Calu3 (cell line): ENCODE measurements at regions of chr3 and their contacts with region 1.

Region 1: GRCh38 chr3:187223799-187224198 is 26.5 kb downstream of the RTP1 start:
- DNase-seq: peak; percentile 79
- H3K4me3 Mint-ChIP-seq: no peak overlapping the region
- H3K27ac Mint-ChIP-seq: peak overlapping the region; percentile 65
- H3K4me1 Mint-ChIP-seq: peaks cover 33% of the 10 kb centered on the region
- H3K27me3 Mint-ChIP-seq: peaks cover 5% of the 10 kb centered on the region
- CTCF ChIP-seq: no peak

Region 2: DNA sequence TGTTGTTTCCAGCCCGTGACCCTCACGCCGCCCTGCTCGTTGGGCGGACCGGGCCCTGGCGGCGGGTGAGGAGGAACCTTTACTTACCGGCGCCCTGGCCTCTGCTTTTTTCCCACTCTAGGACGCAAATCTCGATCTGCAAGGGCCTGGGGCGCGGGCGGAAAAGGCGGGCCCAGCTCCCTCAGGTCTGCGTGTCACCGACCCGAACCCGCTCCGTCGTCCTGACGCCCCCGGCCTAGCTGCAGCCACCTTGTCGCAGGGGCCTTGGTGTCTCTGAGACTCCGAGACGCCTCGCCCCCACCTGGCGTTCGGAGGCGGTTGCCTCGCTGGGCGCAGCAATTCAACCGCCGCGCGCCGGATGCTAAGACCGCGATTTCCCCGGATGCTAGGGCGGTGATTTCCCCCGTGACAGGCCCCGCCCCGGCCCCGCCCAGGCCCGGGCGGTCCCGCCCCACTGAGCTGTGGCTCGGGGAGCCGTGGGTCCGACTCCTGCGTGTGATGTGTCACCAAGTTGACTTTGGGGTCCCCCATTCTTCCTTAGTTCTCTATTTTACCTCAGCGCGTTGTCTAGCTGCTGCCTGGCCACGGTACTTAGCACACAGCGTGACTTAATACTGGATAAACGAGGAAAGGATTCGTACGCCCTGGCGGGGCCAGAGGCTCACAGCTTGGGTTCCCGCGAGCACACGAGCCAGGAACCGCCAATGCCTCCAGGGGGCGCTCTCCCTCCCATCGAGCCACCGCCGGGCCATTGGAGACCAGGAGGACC is 84.5 kb before region 1 on chr3 and contains the start of gene RPL39L:
- CTCF ChIA-PET with region 1: interaction called, 8 read pairs
- intact Hi-C with region 1: loop called (anchors 2 kb)
- DNase-seq: peak; percentile 96
- H3K4me3 Mint-ChIP-seq: peak within 1 kb of the TSS; percentile 84
- H3K27ac Mint-ChIP-seq: peak within 1 kb of the TSS; percentile 69
- H3K4me1 Mint-ChIP-seq: no peaks in the 10 kb centered on the region
- H3K27me3 Mint-ChIP-seq: no peaks in the 10 kb centered on the region
- CTCF ChIP-seq: peak; percentile 99
- total RNA-seq, gene RPL39L: 27.2 and 31.8 TPM in 2 replicates

Region 3: DNA sequence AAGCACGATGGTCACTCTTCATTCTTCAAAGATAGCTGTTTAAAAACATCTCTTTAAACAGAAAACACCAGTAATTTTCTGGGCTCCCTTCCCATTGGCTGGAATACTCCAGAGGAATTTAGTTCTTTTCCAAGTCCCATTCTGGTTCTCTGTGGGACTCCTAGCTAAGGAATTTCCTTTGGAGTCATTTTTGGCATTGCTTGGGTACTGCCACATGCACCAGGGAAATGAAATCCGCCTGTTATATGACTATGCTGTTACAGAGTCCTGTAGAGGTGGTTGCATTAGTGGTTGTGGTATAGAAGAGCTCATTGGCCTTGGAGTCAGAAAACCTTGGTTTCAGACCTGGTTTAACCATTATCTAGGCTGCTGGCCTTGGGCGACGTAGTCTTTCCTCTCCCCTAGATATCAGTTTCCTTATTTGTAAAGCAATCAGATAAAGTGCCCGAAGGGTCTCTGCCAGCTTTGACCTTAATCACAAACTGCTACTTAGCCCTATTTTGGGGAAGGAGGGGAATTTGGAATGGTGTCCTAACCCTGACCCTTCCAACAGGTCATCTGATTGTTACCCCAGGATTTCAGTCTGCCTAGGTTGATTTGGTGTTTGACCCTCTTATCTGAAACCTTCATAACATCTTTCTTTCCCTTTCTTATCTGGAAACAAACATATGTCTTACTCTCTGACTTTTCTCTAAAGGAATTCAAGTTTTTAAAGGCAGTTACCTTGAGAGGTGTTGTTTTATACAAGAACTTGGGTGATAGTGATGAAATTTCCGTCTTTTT is 13.1 kb before region 1 on chr3:
- CTCF ChIA-PET with region 1: interaction called, 10 read pairs
- intact Hi-C with region 1: no loop called
- DNase-seq: no peak
- H3K4me3 Mint-ChIP-seq: no peak overlapping the region
- H3K27ac Mint-ChIP-seq: no peak overlapping the region
- H3K4me1 Mint-ChIP-seq: peaks cover 40% of the 10 kb centered on the region
- H3K27me3 Mint-ChIP-seq: peaks cover 3% of the 10 kb centered on the region
- CTCF ChIP-seq: no peak

Region 4: DNA sequence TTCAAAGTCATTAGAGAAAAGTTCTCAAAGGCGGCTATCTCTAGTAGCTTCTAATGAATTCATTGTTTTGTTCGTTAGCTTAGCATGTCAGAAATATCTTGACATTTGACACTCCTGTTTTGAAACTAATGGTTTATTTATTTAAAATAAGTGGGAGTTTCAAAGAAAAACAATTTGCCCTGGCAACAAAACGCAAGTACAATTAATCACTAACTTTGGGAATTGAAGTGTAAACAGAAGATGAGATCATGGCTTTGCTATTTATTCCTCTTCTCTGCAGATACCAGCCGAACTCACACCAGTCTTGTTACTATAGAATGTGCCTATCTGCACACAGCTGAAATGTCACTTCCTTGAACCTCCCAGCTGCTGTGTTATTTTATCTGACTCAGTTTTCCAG is 40.2 kb after region 1 on chr3:
- CTCF ChIA-PET with region 1: interaction called, 14 read pairs
- intact Hi-C with region 1: loop called (anchors 5 kb)
- DNase-seq: peak; percentile 47
- H3K4me3 Mint-ChIP-seq: no peak overlapping the region
- H3K27ac Mint-ChIP-seq: peak overlapping the region; percentile 7
- H3K4me1 Mint-ChIP-seq: peaks cover 44% of the 10 kb centered on the region
- H3K27me3 Mint-ChIP-seq: no peaks in the 10 kb centered on the region
- CTCF ChIP-seq: no peak

Region 5: DNA sequence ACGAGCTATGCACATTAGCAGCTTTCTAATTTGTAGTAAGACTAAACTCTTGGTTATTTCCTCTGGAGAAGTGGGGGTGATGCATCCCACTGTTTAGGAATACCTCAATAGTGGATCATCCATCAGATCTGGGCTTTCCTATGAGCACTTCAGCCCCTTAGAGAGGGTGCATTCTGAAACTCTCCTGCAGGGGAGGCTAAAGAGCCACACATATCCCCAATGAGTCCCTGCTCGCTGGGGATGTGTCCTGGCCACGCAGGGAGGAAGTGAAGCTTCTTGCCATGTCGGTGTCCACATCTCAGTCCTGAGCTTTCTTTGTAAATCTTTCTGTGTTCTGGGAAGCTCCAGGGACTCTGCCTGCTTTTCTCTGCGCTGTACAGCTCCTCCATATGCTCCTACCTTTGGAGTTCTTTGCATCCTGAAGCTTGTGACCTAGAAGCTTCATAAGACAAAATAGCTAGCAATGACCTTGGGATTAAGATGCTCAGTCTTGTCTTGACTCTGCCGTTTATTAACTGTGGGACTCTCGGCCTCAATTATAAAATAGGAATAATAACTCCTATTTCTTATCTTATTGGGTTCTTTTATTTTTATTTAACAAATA is 96.0 kb after region 1 on chr3:
- CTCF ChIA-PET with region 1: interaction called, 49 read pairs
- intact Hi-C with region 1: loop called (anchors 1 kb)
- DNase-seq: peak; percentile 84
- H3K4me3 Mint-ChIP-seq: peak overlapping the region; percentile 47
- H3K27ac Mint-ChIP-seq: no peak overlapping the region
- H3K4me1 Mint-ChIP-seq: peaks cover 8% of the 10 kb centered on the region
- H3K27me3 Mint-ChIP-seq: peaks cover 33% of the 10 kb centered on the region
- CTCF ChIP-seq: peak; percentile 97

Region 6: GRCh38 chr3:187714404-187714979 is 490.7 kb after region 1 on chr3:
- CTCF ChIA-PET with region 1: no interaction called
- intact Hi-C with region 1: loop called (anchors 1 kb)
- DNase-seq: peak; percentile 90
- H3K4me3 Mint-ChIP-seq: no peak overlapping the region
- H3K27ac Mint-ChIP-seq: no peak overlapping the region
- H3K4me1 Mint-ChIP-seq: peaks cover 10% of the 10 kb centered on the region
- H3K27me3 Mint-ChIP-seq: peaks cover 24% of the 10 kb centered on the region
- CTCF ChIP-seq: peak; percentile 97